ENCODE measurements at regions of chr3 and their contacts with region 1.

Region 1: GRCh38 chr3:71444028-71444860 is 139.3 kb downstream of the FOXP1 start:
- DNase-seq: peak; percentile 62
- ATAC-seq: peak; percentile 80
- H3K4me3 Mint-ChIP-seq: peak overlapping the region; percentile 78
- H3K27ac Mint-ChIP-seq: peak overlapping the region; percentile 99
- H3K4me1 Mint-ChIP-seq: peaks cover 93% of the 10 kb centered on the region
- H3K27me3 Mint-ChIP-seq: no peaks in the 10 kb centered on the region
- CTCF ChIP-seq: no peak

Region 2: DNA sequence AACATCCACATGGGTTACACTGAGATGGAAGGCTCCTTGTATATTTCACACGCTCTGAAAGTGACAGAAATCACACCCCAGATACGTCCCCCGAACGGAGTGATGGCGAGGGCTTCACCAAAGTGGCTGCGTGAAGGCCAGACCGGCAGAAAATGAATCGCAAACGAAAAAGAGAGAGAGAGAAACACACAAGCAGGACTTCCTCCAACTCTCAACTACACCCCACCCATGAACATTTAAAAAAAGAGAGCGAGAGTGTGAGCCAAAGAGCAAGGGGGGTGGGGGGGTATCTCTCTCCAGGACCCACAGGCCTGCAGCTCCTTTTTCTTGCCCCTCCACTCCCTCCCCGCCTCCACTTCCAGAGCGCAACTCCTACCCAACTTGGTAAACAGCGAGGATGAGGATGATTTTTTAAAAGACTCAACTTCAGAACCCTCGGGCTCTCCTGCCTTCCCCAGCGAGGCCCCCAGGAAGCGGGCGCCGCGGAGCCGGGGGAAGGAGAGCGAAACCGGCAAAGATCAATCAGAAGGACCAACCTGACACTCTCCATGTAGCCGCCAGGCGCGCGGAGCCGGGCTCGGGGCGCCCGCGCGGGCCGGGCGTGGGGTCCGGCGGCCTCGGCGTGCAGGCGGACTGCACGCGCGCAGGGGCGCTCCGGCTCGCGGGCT is 379.8 kb before region 1 on chr3:
- CTCF ChIA-PET with region 1: no interaction called
- POLR2A ChIA-PET with region 1: interaction called, 26 read pairs
- intact Hi-C with region 1: loop called (anchors 5 kb)
- DNase-seq: peak; percentile 64
- ATAC-seq: peak; percentile 33
- H3K4me3 Mint-ChIP-seq: no peak overlapping the region
- H3K27ac Mint-ChIP-seq: no peak overlapping the region
- H3K4me1 Mint-ChIP-seq: peaks cover 67% of the 10 kb centered on the region
- H3K27me3 Mint-ChIP-seq: no peaks in the 10 kb centered on the region
- CTCF ChIP-seq: no peak

Region 3: DNA sequence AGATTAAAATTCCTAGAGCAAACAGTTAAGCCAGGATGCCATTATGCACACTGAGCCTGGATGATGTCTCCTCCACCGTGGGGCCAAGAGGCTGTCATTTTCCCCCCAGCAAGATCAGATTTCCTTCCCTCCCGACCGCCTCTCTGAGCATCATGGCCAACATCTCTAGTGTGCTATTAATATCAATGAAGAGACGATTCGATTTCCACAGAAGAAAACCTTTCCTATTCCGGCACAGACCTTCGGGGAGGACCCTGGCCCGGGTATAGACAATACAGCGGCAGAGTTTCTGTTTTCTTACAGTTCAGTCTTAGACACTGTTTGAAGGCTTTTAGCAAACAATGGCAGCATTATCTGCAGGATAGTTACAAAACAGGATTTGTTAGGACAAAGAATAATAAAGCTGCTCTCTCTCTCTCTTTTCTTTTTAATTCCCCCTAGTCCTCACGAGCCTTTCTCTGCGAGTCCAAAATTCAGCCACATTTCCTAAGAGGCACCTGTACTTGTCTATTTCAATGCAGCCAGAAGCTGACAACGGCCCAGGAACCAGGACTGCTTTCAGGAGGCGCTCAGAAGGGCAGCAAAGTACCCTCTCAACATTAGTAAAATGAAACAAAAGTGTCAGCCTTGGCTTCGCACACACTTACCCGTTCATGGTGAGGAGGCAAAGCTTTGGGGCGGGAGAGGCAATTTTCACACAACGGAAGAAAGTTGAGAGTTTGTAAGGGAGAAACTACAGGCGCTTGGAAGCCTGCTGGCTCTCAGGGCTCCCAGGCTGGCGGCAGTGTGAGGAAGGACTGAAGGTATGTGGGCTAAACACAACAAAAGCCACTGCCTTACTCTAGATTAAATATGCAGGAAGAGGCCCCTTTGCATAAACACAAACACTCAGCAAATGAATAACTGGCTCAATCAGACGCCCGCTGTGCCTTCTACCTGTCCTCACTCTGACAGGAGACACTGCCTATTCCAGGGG is 138.7 kb before region 1 on chr3:
- CTCF ChIA-PET with region 1: no interaction called
- POLR2A ChIA-PET with region 1: no interaction called
- intact Hi-C with region 1: loop called (anchors 5 kb)
- DNase-seq: no peak
- ATAC-seq: peak; percentile 38
- H3K4me3 Mint-ChIP-seq: peak overlapping the region; percentile 92
- H3K27ac Mint-ChIP-seq: peak overlapping the region; percentile 94
- H3K4me1 Mint-ChIP-seq: peaks cover 79% of the 10 kb centered on the region
- H3K27me3 Mint-ChIP-seq: no peaks in the 10 kb centered on the region
- CTCF ChIP-seq: no peak

Region 4: GRCh38 chr3:71397046-71397445 is 47.2 kb before region 1 on chr3:
- CTCF ChIA-PET with region 1: interaction called, 5 read pairs
- POLR2A ChIA-PET with region 1: interaction called, 36 read pairs
- intact Hi-C with region 1: loop called (anchors 1 kb)
- DNase-seq: no peak
- ATAC-seq: no peak
- H3K4me3 Mint-ChIP-seq: peak overlapping the region; percentile 36
- H3K27ac Mint-ChIP-seq: peak overlapping the region; percentile 72
- H3K4me1 Mint-ChIP-seq: peaks cover 85% of the 10 kb centered on the region
- H3K27me3 Mint-ChIP-seq: no peaks in the 10 kb centered on the region
- CTCF ChIP-seq: no peak

Region 5: GRCh38 chr3:71428841-71429596 is 15.2 kb before region 1 on chr3:
- CTCF ChIA-PET with region 1: interaction called, 4 read pairs
- POLR2A ChIA-PET with region 1: interaction called, 18 read pairs
- intact Hi-C with region 1: loop called (anchors 1 kb)
- DNase-seq: no peak
- ATAC-seq: peak; percentile 40
- H3K4me3 Mint-ChIP-seq: no peak overlapping the region
- H3K27ac Mint-ChIP-seq: peak overlapping the region; percentile 64
- H3K4me1 Mint-ChIP-seq: peaks cover 94% of the 10 kb centered on the region
- H3K27me3 Mint-ChIP-seq: no peaks in the 10 kb centered on the region
- CTCF ChIP-seq: no peak

Region 6: DNA sequence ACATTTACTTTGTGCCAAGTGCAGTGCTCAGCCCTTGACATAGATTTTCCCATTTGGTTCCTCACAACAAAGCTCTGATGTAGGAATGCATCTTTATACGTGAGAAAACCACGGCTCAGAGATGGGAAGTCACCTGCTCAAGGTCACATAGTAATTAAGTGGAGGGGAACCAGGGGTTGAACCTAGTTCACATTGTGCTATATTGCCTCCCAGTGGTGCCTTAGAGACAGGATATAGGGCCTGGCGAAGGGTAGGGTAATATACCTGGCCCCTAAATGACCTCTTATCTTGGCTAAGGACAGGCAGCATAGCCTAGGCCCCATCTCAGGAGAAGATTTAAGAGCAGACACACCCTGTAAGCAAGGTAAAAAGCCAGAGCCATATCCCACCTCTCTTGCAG is 67.8 kb after region 1 on chr3:
- CTCF ChIA-PET with region 1: interaction called, 3 read pairs
- POLR2A ChIA-PET with region 1: interaction called, 7 read pairs
- intact Hi-C with region 1: loop called (anchors 2 kb)
- DNase-seq: no peak
- ATAC-seq: peak; percentile 97
- H3K4me3 Mint-ChIP-seq: peak overlapping the region; percentile 5
- H3K27ac Mint-ChIP-seq: no peak overlapping the region
- H3K4me1 Mint-ChIP-seq: peaks cover 22% of the 10 kb centered on the region
- H3K27me3 Mint-ChIP-seq: no peaks in the 10 kb centered on the region
- CTCF ChIP-seq: no peak

Region 7: GRCh38 chr3:71673486-71673885 is 229.2 kb after region 1 on chr3:
- CTCF ChIA-PET with region 1: no interaction called
- POLR2A ChIA-PET with region 1: no interaction called
- intact Hi-C with region 1: no loop called
- DNase-seq: no peak
- ATAC-seq: no peak
- H3K4me3 Mint-ChIP-seq: no peak overlapping the region
- H3K27ac Mint-ChIP-seq: no peak overlapping the region
- H3K4me1 Mint-ChIP-seq: no peaks in the 10 kb centered on the region
- H3K27me3 Mint-ChIP-seq: no peaks in the 10 kb centered on the region
- CTCF ChIP-seq: no peak